ENCODE measurements at regions of chr6 and their contacts with region 1.

Region 1: GRCh38 chr6:97497713-97498331 is 214.8 kb upstream of the MMS22L start:
- DNase-seq: no peak

Region 2: GRCh38 chr6:97705568-97705967 is 207.7 kb after region 1 on chr6:
- intact Hi-C with region 1: no loop called
- DNase-seq: no peak

Region 3: DNA sequence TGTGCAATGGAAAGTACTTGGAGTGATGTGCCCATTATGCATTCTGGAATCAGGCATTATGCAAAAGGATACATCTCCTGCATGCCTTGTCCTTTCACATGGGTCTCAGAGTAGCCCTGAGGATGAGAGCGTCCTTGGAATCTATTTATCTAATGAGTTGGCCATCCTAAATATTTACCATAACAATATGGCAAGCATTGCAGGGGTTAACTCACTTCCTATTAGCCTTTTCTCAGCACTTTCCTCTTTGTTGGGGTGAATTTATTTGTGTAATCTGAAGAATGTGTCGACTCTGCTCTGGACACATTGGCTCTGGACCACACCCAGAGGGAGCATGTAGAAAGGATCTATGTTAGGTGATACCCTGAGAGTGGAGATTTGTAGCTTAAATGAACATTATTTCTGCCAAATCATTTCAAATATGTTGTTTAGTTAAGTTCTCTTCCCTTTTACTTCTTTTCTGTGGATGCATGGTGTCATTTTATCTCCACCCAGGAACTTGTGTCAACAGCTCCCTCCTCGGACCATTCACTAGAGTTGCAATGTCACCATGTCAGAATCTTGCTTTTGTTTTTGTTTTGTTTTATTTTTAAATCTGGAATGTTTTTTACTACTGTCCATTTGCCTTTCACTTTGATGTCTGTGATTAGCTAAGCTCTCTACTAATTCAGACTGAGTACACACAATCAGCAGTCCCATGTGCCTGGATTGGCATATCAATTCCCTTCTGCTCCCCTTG is 542.2 kb after region 1 on chr6:
- intact Hi-C with region 1: loop called (anchors 5 kb)
- DNase-seq: no peak

Region 4: DNA sequence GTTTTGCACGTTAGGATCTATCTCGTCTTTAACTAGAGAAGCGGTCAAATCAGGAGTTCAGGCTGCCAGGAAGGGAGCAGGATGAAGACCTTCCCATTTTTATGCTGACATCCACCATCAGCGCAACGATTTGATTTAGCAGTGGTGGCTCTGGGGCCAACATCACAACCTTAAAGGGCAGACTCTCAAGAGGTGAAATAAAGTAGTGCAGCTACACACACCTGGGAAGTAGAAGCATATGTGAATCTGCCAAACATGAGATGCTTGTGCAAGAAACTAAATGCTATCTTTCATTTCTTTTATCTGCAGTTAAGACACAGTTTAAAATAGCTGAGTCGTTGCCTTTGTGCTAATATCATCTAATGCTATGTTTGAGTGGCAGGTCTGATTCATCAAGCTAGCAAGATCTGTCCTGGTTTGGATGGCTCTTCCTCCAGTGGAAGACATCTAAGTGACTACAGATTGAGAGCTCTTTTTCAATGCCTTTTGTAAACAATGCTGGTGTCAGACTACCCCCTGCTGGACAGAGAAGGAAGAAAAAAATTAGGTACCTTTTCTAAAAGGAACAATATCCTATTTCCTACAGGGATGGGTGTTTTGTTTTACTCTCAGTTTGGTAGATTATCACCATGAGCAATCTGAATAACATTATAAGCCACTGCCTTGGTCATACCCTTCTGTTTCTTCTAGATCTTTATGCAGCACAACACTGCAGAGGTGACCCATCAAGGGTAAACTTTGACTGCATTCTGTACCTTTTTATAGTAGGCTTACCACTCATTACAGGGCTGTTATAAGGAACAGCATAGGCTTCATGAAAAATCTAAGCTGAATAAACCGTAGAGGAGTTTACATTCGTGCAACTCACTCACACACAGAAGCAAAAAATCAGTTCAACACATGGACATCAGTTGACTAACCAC is 1621.5 kb after region 1 on chr6:
- intact Hi-C with region 1: loop called (anchors 10 kb)
- DNase-seq: no peak

Measured in cardiac septum (tissue), 1 donor.